Stomach (tissue), 19 donors: ENCODE measurements at regions of chr3 and their contacts with region 1.

Region 1: GRCh38 chr3:15557511-15557946 is 36.0 kb upstream of the COLQ start:
- DNase-seq: peak; percentile 52 to 85
- H3K4me3 ChIP-seq: no peak overlapping the region
- H3K27ac ChIP-seq: no peak overlapping the region
- H3K4me1 ChIP-seq: peaks cover 0 to 13% (median 6%) of the 10 kb centered on the region in 4 donors
- H3K27me3 ChIP-seq: no peaks in the 10 kb centered on the region
- CTCF ChIP-seq: peak in 5 of 7 experiments; percentile 16 to 68 (median 54)
- EP300 ChIP-seq: no peak
- POLR2A ChIP-seq: no peak

Region 2: DNA sequence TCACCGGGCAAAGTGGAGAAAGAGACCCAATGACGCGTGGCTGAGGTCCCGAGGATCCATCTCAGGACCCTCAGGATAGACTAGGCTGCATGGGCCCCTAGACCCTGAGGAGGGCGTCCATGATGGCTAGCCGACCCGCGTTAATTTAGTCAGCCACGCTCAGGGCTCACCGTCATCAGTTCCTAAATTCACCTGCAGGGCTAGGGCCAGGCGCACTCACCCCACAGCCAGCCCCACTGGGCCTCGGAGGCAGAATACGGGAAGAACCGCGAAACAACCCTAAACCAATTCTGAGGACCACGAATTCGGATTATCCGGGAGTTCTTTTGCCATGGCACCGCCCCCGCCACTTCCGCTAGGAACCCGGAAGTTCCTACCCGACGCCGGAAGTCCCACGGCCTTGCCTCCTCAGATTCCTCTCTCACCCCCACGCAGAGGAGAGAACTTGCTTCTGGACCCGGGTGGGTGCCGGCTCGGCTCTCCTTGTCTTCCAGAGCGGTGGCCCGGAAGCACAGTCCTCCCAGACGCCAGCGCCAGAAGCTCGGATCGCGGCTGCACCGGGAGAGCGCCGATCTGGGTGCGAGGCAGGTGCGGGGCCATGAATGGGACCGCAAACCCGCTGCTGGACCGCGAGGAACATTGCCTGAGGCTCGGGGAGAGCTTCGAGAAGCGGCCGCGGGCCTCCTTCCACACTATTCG is 130.2 kb before region 1 on chr3 and contains the starts of genes EAF1 and METTL6:
- intact Hi-C with region 1: loop called (anchors 10 kb)
- DNase-seq: peak; percentile 85 to 94
- H3K4me3 ChIP-seq: peak within 1 kb of the TSS; percentile 76 to 95 (median 84)
- H3K27ac ChIP-seq: peak within 1 kb of the TSS; percentile 70 to 92 (median 87)
- H3K4me1 ChIP-seq: peaks cover 0 to 63% (median 45%) of the 10 kb centered on the region in 4 donors
- H3K27me3 ChIP-seq: no peaks in the 10 kb centered on the region
- CTCF ChIP-seq: peak in 1 of 7 experiments; percentile 4
- EP300 ChIP-seq: no peak
- POLR2A ChIP-seq: no peak
- total RNA-seq, gene EAF1: 1.8 to 62.9 (median 29.5) TPM
- total RNA-seq, gene METTL6: 0.29 to 35.8 (median 5.9) TPM